Activated naive CD4-positive, alpha-beta T cell treated with anti-CD3 and anti-CD28 coated beads for 36 hours (primary cell): ENCODE measurements at regions of chr18 and their contacts with region 1.

Region 1: GRCh38 chr18:35972197-35973052 is at the start of gene RMP24:
- DNase-seq: peak; percentile 96
- H3K4me3 Mint-ChIP-seq: peak within 1 kb of the TSS; percentile 97
- H3K27ac Mint-ChIP-seq: peak within 1 kb of the TSS; percentile 96
- H3K4me1 Mint-ChIP-seq: peaks cover 48% of the 10 kb centered on the region
- H3K27me3 Mint-ChIP-seq: no peaks in the 10 kb centered on the region

Region 2: GRCh38 chr18:35240664-35241447 is 731.6 kb before region 1 on chr18 and contains the start of gene ZNF397:
- CTCF ChIA-PET with region 1: no interaction called
- intact Hi-C with region 1: loop called (anchors 1 kb)
- DNase-seq: peak; percentile 98
- H3K4me3 Mint-ChIP-seq: peak within 1 kb of the TSS; percentile 94
- H3K27ac Mint-ChIP-seq: peak within 1 kb of the TSS; percentile 99
- H3K4me1 Mint-ChIP-seq: peaks cover 38% of the 10 kb centered on the region
- H3K27me3 Mint-ChIP-seq: no peaks in the 10 kb centered on the region
- total RNA-seq, gene ZNF397: 22.6 to 23.2 TPM

Region 3: GRCh38 chr18:35343936-35344735 is 628.3 kb before region 1 on chr18 and contains the start of gene ZNF24:
- CTCF ChIA-PET with region 1: no interaction called
- intact Hi-C with region 1: loop called (anchors 1 kb)
- DNase-seq: peak; percentile 94
- H3K4me3 Mint-ChIP-seq: peak within 1 kb of the TSS; percentile 92
- H3K27ac Mint-ChIP-seq: peak within 1 kb of the TSS; percentile 92
- H3K4me1 Mint-ChIP-seq: peaks cover 43% of the 10 kb centered on the region
- H3K27me3 Mint-ChIP-seq: no peaks in the 10 kb centered on the region
- total RNA-seq, gene ZNF24: 46.8 to 47.8 TPM

Region 4: GRCh38 chr18:35415511-35416073 is 556.8 kb before region 1 on chr18:
- CTCF ChIA-PET with region 1: no interaction called
- intact Hi-C with region 1: loop called (anchors 5 kb)
- DNase-seq: no peak
- H3K4me3 Mint-ChIP-seq: peak overlapping the region; percentile 48
- H3K27ac Mint-ChIP-seq: no peak overlapping the region
- H3K4me1 Mint-ChIP-seq: peaks cover 38% of the 10 kb centered on the region
- H3K27me3 Mint-ChIP-seq: no peaks in the 10 kb centered on the region

Region 5: GRCh38 chr18:35580701-35581539 is 391.5 kb before region 1 on chr18:
- CTCF ChIA-PET with region 1: no interaction called
- intact Hi-C with region 1: loop called (anchors 1 kb)
- DNase-seq: peak; percentile 51
- H3K4me3 Mint-ChIP-seq: peak overlapping the region; percentile 74
- H3K27ac Mint-ChIP-seq: peak overlapping the region; percentile 71
- H3K4me1 Mint-ChIP-seq: peaks cover 45% of the 10 kb centered on the region
- H3K27me3 Mint-ChIP-seq: peaks cover 15% of the 10 kb centered on the region

Region 6: GRCh38 chr18:35904389-35905037 is 67.9 kb before region 1 on chr18:
- CTCF ChIA-PET with region 1: no interaction called
- intact Hi-C with region 1: no loop called
- DNase-seq: no peak
- H3K4me3 Mint-ChIP-seq: no peak overlapping the region
- H3K27ac Mint-ChIP-seq: no peak overlapping the region
- H3K4me1 Mint-ChIP-seq: no peaks in the 10 kb centered on the region
- H3K27me3 Mint-ChIP-seq: peaks cover 8% of the 10 kb centered on the region

Region 7: DNA sequence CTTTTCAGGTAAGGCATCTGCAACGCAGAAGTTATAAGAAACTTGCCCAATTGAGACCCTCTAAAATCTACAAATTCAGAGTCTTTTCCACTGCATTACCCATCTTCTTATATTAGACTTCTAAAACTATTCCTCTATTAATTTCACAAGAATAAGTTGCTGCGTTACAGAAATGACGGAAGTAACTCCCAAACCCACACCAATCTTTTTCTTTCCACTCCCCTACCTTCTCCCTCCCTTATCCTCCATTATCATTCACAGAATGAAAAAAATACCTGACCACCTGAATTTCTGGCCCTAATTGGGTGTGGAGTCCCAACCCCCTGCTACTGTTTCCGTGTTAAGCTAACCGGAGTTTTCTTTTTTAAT is 94.2 kb after region 1 on chr18:
- CTCF ChIA-PET with region 1: no interaction called
- intact Hi-C with region 1: loop called (anchors 1 kb)
- DNase-seq: no peak
- H3K4me3 Mint-ChIP-seq: peak overlapping the region; percentile 90
- H3K27ac Mint-ChIP-seq: peak overlapping the region; percentile 90
- H3K4me1 Mint-ChIP-seq: peaks cover 36% of the 10 kb centered on the region
- H3K27me3 Mint-ChIP-seq: no peaks in the 10 kb centered on the region

Region 8: DNA sequence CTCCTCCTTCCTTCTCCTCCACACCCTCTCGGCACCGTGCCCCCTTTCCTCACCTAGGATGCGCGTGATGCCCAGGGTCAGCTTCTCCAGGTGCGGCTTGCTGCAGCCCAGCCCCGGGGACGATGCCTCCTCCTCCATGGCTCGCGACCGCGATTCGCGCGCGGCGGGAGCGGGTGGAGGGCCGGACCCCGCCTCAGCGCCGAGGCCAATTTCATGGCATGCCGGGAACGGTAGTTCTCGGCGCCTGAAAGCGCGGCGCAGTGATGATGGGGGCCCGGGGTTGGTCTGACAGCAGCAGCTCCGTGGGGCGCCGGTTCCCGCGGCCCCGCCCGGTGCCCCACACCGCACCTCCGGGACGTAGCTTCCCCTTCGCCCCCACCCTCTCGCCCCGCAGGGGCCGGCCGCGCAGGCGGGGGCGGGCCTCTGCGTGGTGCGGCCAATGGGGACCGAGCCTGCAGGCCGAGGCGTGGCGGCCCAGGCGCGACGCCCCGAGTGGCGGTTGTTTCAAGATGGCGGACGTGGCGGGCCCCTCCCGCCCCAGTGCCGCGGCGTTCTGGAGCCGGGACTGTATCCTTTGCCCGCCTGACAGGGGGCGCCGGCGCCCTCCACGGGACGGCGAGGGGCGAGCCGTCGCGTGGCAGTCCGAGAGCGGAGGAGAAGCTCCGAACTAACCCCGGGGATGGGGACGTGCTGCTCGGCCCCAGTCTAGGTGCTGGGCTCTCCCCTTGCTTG is 856.4 kb after region 1 on chr18 and contains the starts of genes KIAA1328 and TPGS2:
- CTCF ChIA-PET with region 1: no interaction called
- intact Hi-C with region 1: loop called (anchors 2 kb)
- DNase-seq: peak; percentile 88
- H3K4me3 Mint-ChIP-seq: peak within 1 kb of the TSS; percentile 82
- H3K27ac Mint-ChIP-seq: peak within 1 kb of the TSS; percentile 81
- H3K4me1 Mint-ChIP-seq: peaks cover 46% of the 10 kb centered on the region
- H3K27me3 Mint-ChIP-seq: no peaks in the 10 kb centered on the region
- total RNA-seq, gene KIAA1328: 7.2 to 7.8 TPM
- total RNA-seq, gene TPGS2: 71.5 to 73.4 TPM